Head of caudate nucleus (tissue), 42 donors: ENCODE measurements at regions of chr1 and their contacts with region 1.

Region 1: GRCh38 chr1:247448107-247448791 is 9.7 kb downstream of the OR2B11 start:
- DNase-seq: peak; percentile 42 to 86 (median 72)

Region 2: DNA sequence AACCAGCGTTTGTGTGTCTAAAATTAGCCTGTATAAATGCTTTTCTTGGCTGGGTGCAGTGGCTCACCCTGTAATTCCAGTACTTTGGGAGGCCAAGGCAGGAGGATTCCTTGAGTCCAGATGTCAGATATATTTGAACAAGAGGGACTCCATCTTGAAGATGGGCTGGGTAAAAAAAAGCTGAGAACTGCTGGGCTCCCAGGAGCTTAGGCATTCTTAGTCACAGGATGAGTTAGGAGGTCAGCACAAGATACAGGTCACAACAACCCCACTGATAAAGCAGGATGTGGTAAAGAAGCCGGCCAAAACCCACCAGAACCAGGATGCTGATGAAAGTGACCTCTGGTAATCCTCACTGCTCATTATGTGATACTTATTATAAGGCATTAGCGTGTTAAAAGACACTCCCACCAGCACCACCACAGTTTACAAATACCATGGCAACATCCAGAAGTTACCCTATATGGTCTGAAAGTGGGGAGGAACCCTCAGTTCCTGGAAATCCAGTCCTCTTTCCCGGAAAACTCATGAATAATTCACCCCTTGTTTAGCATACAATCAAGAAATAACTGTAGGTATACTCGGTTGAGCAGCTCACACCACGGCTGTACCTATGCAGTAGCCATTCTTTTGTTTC is 80.3 kb before region 1 on chr1:
- intact Hi-C with region 1: no loop called
- DNase-seq: no peak

Region 3: DNA sequence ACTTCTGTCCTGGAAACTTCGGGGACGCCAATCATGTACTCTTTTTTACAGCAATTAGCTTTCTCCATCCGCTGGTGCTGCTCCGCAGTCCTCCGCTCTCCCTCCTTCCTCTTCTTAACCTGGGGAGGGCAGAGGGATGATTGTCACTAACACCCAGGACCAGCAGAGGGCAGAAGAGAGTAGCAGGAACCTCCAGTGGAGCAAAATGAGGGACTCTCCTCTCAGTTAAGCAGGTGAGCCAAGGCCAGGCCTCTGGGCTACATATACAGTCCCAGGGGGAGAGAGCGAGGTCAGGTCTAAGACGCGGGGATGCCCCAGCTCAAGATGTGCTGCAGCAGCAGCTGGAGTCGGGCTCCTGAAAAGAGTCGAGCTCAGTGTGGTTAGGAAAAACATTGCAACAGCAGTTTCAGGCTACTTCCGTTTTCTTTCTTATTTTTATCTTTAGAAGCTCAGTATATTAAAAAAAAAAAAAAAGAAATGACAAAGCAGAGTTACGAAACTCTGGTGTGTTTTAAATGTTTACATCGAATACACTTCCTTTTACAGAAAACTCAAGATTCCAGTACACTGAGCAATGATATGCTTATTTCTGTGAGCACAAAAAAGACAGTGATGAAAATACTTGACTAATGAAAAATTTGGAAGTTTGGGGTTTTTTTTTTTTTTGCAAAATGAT is 58.0 kb before region 1 on chr1:
- intact Hi-C with region 1: loop called (anchors 5 kb)
- DNase-seq: peak; percentile 49 to 93 (median 84)

Region 4: GRCh38 chr1:247401310-247402119 is 46.7 kb before region 1 on chr1:
- intact Hi-C with region 1: no loop called
- DNase-seq: peak in 1 of 42 donors; percentile 7

Region 5: DNA sequence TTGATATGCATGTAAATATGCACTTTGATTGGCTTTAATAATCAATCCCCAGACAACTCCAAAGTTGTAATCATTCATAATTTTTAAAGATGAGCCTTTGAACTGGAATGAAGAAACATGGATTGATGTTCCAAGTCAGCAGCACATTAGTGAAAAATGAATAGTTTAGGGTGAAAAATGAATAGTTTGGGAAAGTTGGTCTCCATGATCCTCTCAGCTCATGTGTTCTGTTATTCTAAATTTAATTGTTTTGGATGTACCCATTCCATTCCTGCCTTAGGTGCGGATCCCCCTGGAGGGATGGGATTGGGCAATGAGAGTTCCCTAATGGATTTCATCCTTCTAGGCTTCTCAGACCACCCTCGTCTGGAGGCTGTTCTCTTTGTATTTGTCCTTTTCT is 157.0 kb after region 1 on chr1 and contains the start of gene OR2G3:
- intact Hi-C with region 1: no loop called
- DNase-seq: no peak